ENCODE measurements at regions of chr6 and their contacts with region 1.

Region 1: GRCh38 chr6:19024737-19025136 is 637.6 kb downstream of the RNF144B start:
- DNase-seq: no peak
- ATAC-seq: peak; percentile 58 to 80
- H3K4me3 ChIP-seq: no peak overlapping the region
- H3K27ac ChIP-seq: no peak overlapping the region
- H3K4me1 ChIP-seq: no peaks in the 10 kb centered on the region
- H3K27me3 ChIP-seq: no peaks in the 10 kb centered on the region

Region 2: GRCh38 chr6:18693881-18694280 is 330.9 kb before region 1 on chr6:
- intact Hi-C with region 1: no loop called
- DNase-seq: no peak
- ATAC-seq: no peak
- H3K4me3 ChIP-seq: no peak overlapping the region
- H3K27ac ChIP-seq: no peak overlapping the region
- H3K4me1 ChIP-seq: no peaks in the 10 kb centered on the region
- H3K27me3 ChIP-seq: no peaks in the 10 kb centered on the region

Region 3: DNA sequence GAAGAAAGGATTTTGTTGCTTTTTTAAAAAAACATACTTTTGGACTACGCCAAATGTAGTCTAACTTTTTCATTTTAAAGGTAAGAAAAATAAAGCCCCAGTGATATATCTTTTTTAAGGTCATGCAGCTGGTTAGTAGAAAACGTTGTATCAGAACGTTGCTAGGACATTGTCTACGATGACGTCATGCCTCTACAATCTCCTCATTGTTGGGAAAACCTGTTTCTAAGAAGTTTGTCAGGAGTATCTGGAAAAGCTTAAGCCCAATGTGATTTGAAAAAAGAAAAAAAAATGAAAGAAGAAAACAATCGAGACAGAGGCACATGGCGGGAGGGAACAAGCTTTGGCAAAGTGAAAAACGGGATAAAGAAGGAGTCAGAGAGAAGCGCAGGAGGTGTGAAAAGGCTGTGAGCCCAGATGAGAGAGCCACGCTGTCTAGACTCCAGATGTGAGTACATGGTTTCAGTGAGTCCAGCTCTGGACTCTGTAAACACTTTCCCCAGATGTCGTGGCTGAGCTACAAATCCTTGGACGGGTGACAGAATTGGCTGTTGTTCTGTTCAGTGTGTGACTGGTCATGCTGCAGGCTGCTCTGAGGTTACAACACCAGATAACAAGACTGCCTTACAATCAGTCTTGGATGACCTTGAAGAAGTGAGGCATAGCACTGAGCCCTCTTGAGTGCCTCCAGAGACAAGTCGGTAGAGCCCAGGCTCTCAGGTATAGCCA is 155.8 kb after region 1 on chr6:
- intact Hi-C with region 1: loop called in 1 of 4 experiments (anchors 10 kb)
- DNase-seq: peak; percentile 73 to 85 (median 84)
- ATAC-seq: peak; percentile 98 to 99
- H3K4me3 ChIP-seq: no peak overlapping the region
- H3K27ac ChIP-seq: no peak overlapping the region
- H3K4me1 ChIP-seq: no peaks in the 10 kb centered on the region
- H3K27me3 ChIP-seq: no peaks in the 10 kb centered on the region